ENCODE measurements at regions of chr16 and their contacts with region 1.

Region 1: GRCh38 chr16:5965321-5965720 is 867.7 kb upstream of the EEF2KMT start:
- DNase-seq: no peak
- H3K4me3 ChIP-seq: no peak overlapping the region
- H3K27ac ChIP-seq: no peak overlapping the region
- H3K4me1 ChIP-seq: no peaks in the 10 kb centered on the region
- H3K27me3 ChIP-seq: no peaks in the 10 kb centered on the region
- CTCF ChIP-seq: no peak
- POLR2A ChIP-seq: no peak

Region 2: GRCh38 chr16:7315813-7316212 is 1350.5 kb after region 1 on chr16:
- intact Hi-C with region 1: loop called (anchors 5 kb)
- DNase-seq: no peak
- H3K4me3 ChIP-seq: no peak overlapping the region
- H3K27ac ChIP-seq: no peak overlapping the region
- H3K4me1 ChIP-seq: no peaks in the 10 kb centered on the region
- H3K27me3 ChIP-seq: no peaks in the 10 kb centered on the region
- CTCF ChIP-seq: no peak
- POLR2A ChIP-seq: no peak

Measured in breast epithelium (tissue), 4 donors.